Esophagus muscularis mucosa (tissue), 4 donors: ENCODE measurements at regions of chr2 and their contacts with region 1.

Region 1: DNA sequence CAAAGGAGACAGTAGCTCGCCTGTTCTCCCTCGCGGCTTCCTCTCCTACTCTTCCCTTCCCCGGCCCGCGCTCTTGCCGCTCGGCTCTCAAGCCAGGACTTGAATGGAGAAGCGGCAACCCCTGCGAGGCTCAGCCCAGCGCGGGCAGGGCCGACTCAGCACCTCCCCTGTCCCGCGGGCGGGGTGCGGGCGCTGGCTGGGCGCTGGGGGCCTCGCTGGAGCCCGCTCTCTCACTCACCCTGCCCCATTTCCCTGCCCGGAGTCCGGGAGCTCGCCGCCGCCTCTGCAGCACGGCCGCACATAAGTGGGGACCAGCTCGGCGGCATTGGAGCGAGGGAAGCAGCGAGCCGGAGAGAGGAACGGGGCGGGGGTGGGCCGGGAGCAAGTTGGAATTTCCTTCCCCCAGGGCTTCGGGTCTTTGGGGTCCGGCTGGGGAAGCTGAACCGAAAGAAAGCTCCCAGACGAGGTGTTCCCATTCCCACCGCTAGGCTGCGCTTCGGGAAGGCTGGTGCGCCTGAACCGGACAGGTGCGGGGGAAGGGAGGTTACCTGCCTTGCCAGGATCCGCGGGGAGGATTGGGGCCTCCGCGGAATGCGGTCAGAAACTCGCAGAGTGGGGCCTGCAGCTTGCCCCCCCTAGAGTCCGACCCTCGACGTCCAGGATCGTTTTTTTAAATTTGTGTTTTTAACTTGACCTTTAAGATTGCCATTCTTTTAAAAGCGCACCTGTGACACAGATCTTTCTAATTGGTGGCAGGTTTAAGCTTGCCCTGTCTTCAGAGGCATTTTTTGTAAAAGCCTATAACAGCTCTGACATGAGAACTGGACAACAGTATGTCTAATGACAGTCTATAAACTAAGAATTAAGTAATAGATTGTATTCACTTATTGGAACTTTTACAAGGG is at the start of gene COBLL1:
- DNase-seq: peak; percentile 93
- H3K4me3 ChIP-seq: peak within 1 kb of the TSS; percentile 69 to 94 (median 82)
- H3K27ac ChIP-seq: peak within 1 kb of the TSS; percentile 91 to 99 (median 97)
- H3K4me1 ChIP-seq: peaks cover 3 to 42% (median 37%) of the 10 kb centered on the region in 4 donors
- H3K27me3 ChIP-seq: no peaks in the 10 kb centered on the region
- CTCF ChIP-seq: peak; percentile 80 to 93 (median 82)
- EP300 ChIP-seq: no peak
- POLR2A ChIP-seq: no peak
- total RNA-seq, gene COBLL1: 41.4 to 66.0 (median 61.9) TPM

Region 2: GRCh38 chr2:164737612-164738081 is 104.3 kb before region 1 on chr2:
- intact Hi-C with region 1: loop called (anchors 2 kb)
- DNase-seq: no peak
- H3K4me3 ChIP-seq: peak overlapping the region in 1 of 4 donors; percentile 21
- H3K27ac ChIP-seq: no peak overlapping the region
- H3K4me1 ChIP-seq: peaks cover 23 to 54% (median 48%) of the 10 kb centered on the region in 4 donors
- H3K27me3 ChIP-seq: no peaks in the 10 kb centered on the region
- CTCF ChIP-seq: peak; percentile 69 to 82 (median 81)
- EP300 ChIP-seq: no peak
- POLR2A ChIP-seq: no peak

Region 3: DNA sequence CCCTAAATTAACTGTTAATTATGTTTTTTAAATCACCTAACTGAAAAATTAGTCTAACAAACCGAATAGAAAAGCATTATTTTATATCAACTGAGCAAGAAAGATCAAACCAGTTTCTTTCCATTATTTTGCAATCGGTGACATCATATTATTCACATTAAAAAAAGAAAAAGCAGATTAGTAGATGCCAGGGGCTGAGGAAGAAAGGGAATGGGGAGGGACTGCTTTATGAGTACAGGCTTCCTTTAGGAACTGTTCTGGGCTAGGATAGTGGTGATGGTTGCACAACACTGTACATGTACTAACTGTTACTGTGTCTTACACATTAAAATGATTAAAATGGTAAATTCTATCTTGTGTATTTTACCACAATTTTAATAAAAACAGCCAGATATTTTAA is 59.6 kb before region 1 on chr2:
- intact Hi-C with region 1: loop called (anchors 10 kb)
- DNase-seq: no peak
- H3K4me3 ChIP-seq: no peak overlapping the region
- H3K27ac ChIP-seq: peak overlapping the region; percentile 80 to 90 (median 86)
- H3K4me1 ChIP-seq: peaks cover 61 to 87% (median 81%) of the 10 kb centered on the region in 4 donors
- H3K27me3 ChIP-seq: no peaks in the 10 kb centered on the region
- CTCF ChIP-seq: no peak
- EP300 ChIP-seq: no peak
- POLR2A ChIP-seq: no peak

Region 4: DNA sequence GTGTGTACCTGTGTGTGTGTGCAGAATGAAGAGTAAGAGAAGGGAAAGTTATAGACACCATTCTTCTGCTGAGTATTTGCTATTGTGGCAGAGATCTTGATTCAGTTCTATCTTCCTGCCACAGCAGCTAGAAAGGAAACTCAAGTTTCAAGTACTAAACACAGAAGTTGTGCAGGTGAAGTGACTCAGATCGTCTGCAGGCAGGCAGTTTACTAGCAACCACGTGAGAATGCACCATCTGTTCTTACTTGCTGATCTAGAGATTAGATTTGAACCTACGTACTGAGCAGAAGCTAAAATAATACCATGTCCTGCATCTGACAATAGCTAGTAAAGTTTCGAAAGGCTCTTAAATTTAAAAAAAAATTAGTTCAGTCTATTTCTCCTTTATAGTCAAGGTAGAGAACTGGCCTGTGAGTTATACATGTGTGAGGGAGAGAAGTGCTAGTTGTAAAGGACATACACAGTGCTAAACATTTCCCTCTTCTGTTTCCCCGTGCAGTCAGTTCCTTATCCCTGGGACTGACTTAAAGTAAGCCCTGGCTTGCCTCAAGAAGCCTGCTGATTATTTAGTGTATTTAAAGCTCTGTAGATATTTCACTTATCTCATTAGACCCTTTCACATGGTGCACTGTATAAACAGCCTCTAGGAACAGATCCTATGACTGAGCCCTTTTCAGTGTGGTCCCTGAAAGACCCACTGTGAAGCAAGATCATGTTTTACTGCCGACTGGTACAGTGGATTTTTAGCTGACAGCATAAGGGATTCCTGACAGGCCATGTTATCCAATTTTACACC is 68.3 kb after region 1 on chr2:
- intact Hi-C with region 1: loop called (anchors 5 kb)
- DNase-seq: no peak
- H3K4me3 ChIP-seq: no peak overlapping the region
- H3K27ac ChIP-seq: peak overlapping the region; percentile 50 to 67 (median 60)
- H3K4me1 ChIP-seq: peaks cover 27 to 45% (median 32%) of the 10 kb centered on the region in 4 donors
- H3K27me3 ChIP-seq: no peaks in the 10 kb centered on the region
- CTCF ChIP-seq: no peak
- EP300 ChIP-seq: no peak
- POLR2A ChIP-seq: no peak